ENCODE measurements at regions of chr16 and their contacts with region 1.

Region 1: DNA sequence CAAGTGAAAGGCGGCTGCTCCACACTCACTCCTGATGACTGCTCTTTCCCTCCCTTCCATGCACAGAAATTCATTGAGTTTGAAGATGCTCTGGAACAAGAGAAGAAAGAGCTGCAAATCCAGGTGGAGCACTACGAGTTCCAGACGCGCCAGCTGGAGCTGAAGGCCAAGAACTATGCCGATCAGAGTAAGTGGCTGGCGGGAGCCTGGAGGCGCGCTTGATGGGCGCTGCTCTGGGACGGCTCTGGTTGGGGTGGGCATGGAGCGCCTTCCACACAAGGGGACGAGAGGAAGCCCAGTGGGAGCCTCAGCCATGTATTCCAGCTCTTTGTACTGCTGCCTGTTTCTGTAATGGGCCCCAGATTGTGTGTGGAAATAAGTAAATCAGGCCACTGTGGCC is 18.5 kb downstream of the MAPK8IP3 start:
- DNase-seq: no peak
- H3K27ac ChIP-seq: 0 out of 2 replicates have a peak overlapping the region, but pooled peaks have one; percentile 3
- CTCF ChIP-seq: no peak

Region 2: DNA sequence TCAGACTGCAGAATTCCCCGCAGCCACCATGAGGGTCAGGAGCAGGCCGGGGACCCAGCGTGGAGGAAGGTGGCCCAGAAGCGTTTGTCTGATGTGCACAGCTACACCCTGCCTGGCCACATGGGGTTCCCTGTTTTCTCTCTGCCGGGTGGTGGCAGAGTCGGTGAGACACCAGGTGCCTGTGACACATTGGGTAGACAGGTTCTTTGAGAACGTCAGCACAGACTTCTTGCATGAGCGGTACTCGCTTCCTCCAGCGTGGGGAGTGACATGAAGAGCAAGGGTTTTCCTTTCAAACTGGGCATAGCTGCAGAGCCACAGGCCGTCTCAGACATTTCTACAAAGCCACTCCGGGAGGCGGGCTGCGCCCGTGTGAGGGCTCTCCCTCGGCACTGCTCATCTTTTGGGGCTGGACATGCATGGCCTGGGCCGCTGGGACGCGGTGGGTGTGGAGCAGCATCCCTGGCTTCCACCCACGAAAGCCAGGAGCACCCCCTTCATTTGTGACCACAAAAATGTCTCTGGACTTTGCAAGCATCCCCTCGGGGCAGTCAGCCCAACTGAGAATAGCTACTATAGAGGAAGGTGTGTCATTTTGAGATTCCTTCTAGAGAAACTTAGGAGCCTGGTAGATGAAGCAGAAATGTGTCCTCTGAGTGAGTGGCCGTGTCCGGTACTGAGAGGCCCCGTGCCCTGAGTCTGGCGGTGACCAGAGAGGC is 20.8 kb after region 1 on chr16:
- CTCF ChIA-PET with region 1: interaction called, 10 read pairs
- POLR2A ChIA-PET with region 1: no interaction called
- DNase-seq: peak; percentile 69
- H3K27ac ChIP-seq: peak overlapping the region; percentile 48
- CTCF ChIP-seq: no peak